Cardiac septum (tissue), 1 donor: ENCODE measurements at regions of chr2 and their contacts with region 1.

Region 1: GRCh38 chr2:151051574-151052220 is 210.0 kb downstream of the RBM43 start:
- DNase-seq: no peak

Region 2: GRCh38 chr2:150624001-150624401 is 427.7 kb before region 1 on chr2:
- intact Hi-C with region 1: loop called (anchors 10 kb)
- DNase-seq: no peak

Region 3: GRCh38 chr2:150916467-150917396 is 135.0 kb before region 1 on chr2:
- intact Hi-C with region 1: no loop called
- DNase-seq: no peak